AG04450 (cell line): ENCODE measurements at regions of chr1 and their contacts with region 1.

Region 1: DNA sequence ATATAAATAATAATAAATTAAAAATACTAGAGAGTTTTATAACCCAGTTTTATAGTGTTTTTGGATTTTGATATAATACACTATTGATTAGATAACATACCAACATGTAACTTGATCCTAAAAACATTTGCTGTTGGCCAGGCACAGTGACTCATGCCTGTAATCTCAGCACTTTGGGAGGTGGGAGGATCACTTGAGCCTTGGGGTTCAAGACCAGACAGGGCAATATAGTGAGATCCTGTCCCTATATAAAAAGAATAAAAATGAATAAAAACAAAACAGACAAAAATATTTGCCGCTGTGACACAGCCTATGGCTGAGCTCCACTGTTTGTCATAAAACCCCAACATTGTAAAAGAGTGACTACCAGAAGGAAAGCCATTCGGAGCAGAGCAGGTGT is 26.1 kb downstream of the VPS13D start:
- DNase-seq: no peak
- H3K4me3 ChIP-seq: no peak overlapping the region
- H3K27ac ChIP-seq: no peak overlapping the region
- H3K27me3 ChIP-seq: no peaks in the 10 kb centered on the region
- CTCF ChIP-seq: no peak

Region 2: GRCh38 chr1:12232221-12232620 is 23.7 kb before region 1 on chr1:
- CTCF ChIA-PET with region 1: no interaction called
- POLR2A ChIA-PET with region 1: no interaction called
- DNase-seq: no peak
- H3K4me3 ChIP-seq: no peak overlapping the region
- H3K27ac ChIP-seq: no peak overlapping the region
- H3K27me3 ChIP-seq: peaks cover 6% of the 10 kb centered on the region
- CTCF ChIP-seq: no peak

Region 3: GRCh38 chr1:13469343-13469742 is 1213.4 kb after region 1 on chr1:
- CTCF ChIA-PET with region 1: no interaction called
- POLR2A ChIA-PET with region 1: interaction called, 11 read pairs
- DNase-seq: no peak
- H3K4me3 ChIP-seq: no peak overlapping the region
- H3K27ac ChIP-seq: no peak overlapping the region
- H3K27me3 ChIP-seq: no peaks in the 10 kb centered on the region
- CTCF ChIP-seq: no peak